ENCODE measurements at regions of chr16 and their contacts with region 1.

Region 1: DNA sequence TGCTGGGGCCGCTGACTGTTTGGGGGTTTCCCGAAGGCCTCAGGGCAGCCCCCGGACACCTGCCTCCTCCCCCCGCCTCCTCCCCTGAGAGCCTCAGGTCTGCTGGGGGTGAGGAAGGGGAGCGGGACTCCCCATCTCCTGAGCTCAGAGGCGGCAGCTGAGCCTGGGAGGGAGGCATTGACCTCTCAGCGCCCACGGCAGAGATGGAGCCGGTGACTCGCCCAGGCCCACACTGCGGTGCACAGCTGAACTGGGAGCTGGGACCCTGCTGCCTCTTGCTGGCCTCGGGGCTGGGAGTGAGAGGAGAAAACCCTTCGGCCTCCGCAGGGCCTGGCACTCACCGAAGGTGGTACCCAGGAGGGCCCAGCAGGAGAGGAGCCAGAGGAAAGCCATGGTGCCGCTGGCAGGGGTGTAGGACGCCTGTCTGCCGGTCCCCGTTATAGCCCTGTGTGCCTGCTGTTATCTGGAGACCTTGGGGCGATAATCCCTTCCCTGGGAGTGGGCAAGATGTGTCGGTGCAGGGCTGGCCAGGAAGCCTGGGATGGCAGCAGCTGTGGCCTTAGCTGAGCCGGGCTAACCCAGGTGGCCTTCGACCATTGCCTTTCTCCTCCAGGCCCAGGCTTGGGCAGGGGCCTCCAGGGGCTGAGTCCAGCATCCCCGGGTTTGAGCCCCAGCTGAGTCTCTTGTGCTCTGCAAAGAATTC is at the start of gene CTRB2:
- DNase-seq: no peak
- ATAC-seq: no peak
- H3K4me3 ChIP-seq: no peak within 1 kb of the TSS
- H3K4me3 Mint-ChIP-seq: no peak within 1 kb of the TSS
- H3K27ac ChIP-seq: no peak within 1 kb of the TSS
- H3K27ac Mint-ChIP-seq: no peak within 1 kb of the TSS
- H3K4me1 ChIP-seq: peaks cover 2% of the 10 kb centered on the region
- H3K4me1 Mint-ChIP-seq: peaks cover 8% of the 10 kb centered on the region
- H3K27me3 ChIP-seq: no peaks in the 10 kb centered on the region
- H3K27me3 Mint-ChIP-seq: no peaks in the 10 kb centered on the region
- CTCF ChIP-seq: no peak
- total RNA-seq, gene CTRB2: not detected

Region 2: GRCh38 chr16:74320707-74321106 is 886.2 kb before region 1 on chr16:
- CTCF ChIA-PET with region 1: no interaction called
- POLR2A ChIA-PET with region 1: no interaction called
- intact Hi-C with region 1: no loop called
- DNase-seq: no peak
- ATAC-seq: no peak
- H3K4me3 ChIP-seq: no peak overlapping the region
- H3K4me3 Mint-ChIP-seq: no peak overlapping the region
- H3K27ac ChIP-seq: no peak overlapping the region
- H3K27ac Mint-ChIP-seq: no peak overlapping the region
- H3K4me1 ChIP-seq: no peaks in the 10 kb centered on the region
- H3K4me1 Mint-ChIP-seq: no peaks in the 10 kb centered on the region
- H3K27me3 ChIP-seq: no peaks in the 10 kb centered on the region
- H3K27me3 Mint-ChIP-seq: no peaks in the 10 kb centered on the region
- CTCF ChIP-seq: no peak

Region 3: DNA sequence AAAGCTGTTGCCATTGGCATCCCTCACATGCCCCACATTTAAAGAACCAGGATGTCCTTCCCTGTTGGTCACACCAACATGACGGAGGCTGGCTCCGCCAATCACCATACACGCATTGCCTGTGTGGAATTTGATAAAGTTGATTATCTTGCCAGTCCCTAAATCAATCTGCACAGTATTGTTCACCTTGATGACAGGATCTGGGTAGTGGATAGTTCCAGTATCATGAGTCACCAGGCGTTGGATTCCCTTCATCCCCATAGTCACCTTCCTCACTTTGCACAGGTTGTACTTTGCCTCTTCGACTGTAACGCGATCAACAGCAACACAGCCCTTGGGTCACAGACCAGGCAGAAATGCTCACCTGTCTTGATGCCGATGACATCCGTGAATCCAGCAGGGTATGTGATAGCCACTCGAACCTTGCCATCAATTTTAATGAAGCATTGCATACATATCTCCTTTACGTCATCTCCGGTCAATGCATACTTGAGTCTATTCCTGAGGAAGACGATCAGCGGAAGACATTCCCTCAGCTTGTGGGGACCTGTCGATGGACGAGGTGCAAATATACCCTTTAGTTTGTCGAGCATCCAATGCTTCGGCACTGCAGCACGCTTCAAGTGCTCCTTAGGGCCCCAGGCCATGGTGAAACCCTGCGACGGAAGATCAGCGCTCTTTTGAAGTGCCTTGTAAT is 14.2 kb before region 1 on chr16:
- CTCF ChIA-PET with region 1: no interaction called
- POLR2A ChIA-PET with region 1: no interaction called
- intact Hi-C with region 1: no loop called
- DNase-seq: no peak
- ATAC-seq: no peak
- H3K4me3 ChIP-seq: no peak overlapping the region
- H3K4me3 Mint-ChIP-seq: no peak overlapping the region
- H3K27ac ChIP-seq: no peak overlapping the region
- H3K27ac Mint-ChIP-seq: no peak overlapping the region
- H3K4me1 ChIP-seq: no peaks in the 10 kb centered on the region
- H3K4me1 Mint-ChIP-seq: no peaks in the 10 kb centered on the region
- H3K27me3 ChIP-seq: peaks cover under 1 to 6% of the 10 kb centered on the region in 2 experiments
- H3K27me3 Mint-ChIP-seq: peaks cover 17% of the 10 kb centered on the region
- CTCF ChIP-seq: no peak

Region 4: DNA sequence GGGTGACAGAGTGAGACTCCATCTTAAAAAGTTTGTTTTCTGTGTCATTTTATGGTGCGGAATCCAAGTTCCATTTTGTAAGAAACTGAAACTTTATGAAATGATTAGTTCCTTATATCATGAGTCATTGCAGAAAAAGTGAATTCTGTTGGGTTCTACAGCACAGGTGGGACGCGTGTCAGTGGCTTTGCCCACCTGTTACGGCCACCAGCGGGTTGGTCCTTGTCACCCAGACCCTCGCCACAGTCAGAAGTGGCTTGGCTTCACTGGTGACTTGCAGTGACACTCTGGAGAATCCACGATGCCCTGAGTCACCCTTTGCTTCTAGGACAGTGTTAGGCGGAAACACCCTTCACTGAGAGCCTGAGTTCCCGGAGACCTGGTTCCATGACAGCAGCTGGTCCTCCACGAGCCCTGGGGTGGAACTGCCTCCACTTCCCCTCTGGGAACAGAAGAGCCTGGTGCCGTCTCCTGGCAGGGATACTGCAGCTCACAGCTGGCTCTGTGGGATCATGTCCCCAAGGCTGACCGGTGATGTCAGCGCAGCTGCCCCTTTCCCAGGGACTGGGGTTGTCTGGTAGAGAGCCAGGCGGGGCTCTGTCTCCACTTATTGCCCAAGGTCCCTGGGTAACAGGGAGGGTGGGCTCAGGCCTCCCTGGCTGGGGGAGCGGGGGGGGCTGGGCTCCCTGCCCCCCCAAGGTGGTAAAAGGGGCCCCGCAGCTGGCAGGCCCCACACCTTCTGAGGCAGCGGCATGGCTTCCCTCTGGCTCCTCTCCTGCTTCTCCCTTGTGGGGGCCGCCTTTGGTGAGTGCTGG is 11.6 kb after region 1 on chr16 and contains the start of gene CTRB1:
- CTCF ChIA-PET with region 1: no interaction called
- POLR2A ChIA-PET with region 1: interaction called, 3 read pairs
- intact Hi-C with region 1: loop called in 1 of 2 experiments (anchors 2 kb)
- DNase-seq: no peak
- ATAC-seq: no peak
- H3K4me3 ChIP-seq: peak within 1 kb of the TSS; percentile 41
- H3K4me3 Mint-ChIP-seq: peak within 1 kb of the TSS; percentile 87
- H3K27ac ChIP-seq: no peak within 1 kb of the TSS
- H3K27ac Mint-ChIP-seq: peak within 1 kb of the TSS; percentile 84
- H3K4me1 ChIP-seq: peaks cover 8% of the 10 kb centered on the region
- H3K4me1 Mint-ChIP-seq: peaks cover 11% of the 10 kb centered on the region
- H3K27me3 ChIP-seq: no peaks in the 10 kb centered on the region
- H3K27me3 Mint-ChIP-seq: no peaks in the 10 kb centered on the region
- CTCF ChIP-seq: no peak
- total RNA-seq, gene CTRB1: not detected

Region 5: DNA sequence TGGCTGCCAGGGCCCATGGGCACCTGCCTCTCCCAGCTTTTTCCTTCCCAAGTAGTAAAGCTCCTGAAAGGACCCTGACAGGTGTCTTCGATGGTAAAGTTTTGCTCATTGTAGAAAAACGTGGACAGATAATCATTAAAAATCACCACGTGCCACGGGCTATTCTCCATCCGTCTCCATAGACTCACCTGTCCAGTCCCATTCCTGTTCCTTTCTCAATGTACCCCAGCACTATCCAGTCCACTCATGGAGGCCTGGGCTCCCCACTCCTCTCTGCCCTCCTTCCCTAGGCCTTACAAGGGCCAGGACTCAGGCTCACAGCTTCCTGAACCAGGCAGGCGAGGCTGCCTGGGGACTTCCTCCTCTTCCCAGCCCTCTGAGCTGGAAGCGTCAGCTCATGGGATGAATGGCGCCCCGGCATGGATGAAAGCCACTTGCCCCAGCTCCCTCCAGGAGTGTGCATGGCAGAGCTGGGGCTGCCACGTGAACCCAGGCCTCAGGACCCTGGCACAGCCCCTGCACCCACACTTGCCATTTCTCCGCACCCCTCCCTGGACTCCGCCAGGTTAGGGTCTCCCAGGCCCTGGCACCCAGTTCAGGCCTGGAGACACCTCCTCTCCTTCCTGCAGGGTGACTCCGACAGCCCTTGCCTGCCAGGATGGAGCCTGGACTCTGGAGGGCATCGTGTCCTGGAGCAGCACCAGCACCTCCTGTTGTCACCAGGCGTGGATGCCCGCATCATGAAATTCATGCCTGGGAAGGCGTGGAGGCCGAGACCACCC is 20.7 kb after region 1 on chr16:
- CTCF ChIA-PET with region 1: no interaction called
- POLR2A ChIA-PET with region 1: no interaction called
- intact Hi-C with region 1: loop called (anchors 2 kb)
- DNase-seq: no peak
- ATAC-seq: no peak
- H3K4me3 ChIP-seq: no peak overlapping the region
- H3K4me3 Mint-ChIP-seq: no peak overlapping the region
- H3K27ac ChIP-seq: no peak overlapping the region
- H3K27ac Mint-ChIP-seq: no peak overlapping the region
- H3K4me1 ChIP-seq: no peaks in the 10 kb centered on the region
- H3K4me1 Mint-ChIP-seq: no peaks in the 10 kb centered on the region
- H3K27me3 ChIP-seq: no peaks in the 10 kb centered on the region
- H3K27me3 Mint-ChIP-seq: peaks cover 8% of the 10 kb centered on the region
- CTCF ChIP-seq: no peak

Measured in CD4-positive, alpha-beta T cell (primary cell).